ENCODE measurements at regions of chr3 and their contacts with region 1.

Region 1: DNA sequence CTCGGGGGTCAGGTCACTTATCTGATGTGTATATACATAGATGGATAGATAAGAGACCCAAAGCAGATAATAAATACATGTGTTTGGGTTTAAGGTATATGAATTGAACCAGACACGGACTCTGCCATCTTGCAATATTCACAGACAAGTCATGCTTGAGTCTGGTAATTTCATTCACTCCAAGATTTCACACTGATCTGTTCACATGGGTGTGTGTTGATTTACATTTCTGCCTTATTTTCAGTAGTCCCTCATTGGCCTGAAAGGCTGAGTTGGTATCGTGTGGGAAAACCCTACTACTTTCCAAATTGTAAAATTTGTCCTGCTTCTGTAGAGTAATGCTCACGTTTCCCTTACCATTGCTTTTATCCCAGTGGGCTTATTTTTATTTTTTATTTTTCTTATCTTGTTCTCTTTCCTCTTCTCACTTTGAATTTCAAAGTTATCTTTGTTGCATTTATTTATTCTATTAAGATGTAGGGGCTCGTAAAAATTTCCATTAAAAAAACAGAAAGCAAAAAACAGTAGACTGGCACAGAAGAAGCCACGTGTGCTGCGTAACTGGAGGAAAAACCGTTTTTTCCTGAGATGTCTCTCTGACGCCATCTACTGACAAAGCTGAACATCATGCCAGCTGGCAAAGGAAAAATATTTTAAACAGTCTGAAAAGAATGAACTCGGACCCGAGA is 10.8 kb upstream of the MFSD1 start:
- DNase-seq: peak in 2 of 4 donors; percentile 70 to 84
- ATAC-seq: peak; percentile 84
- H3K4me3 ChIP-seq: no peak overlapping the region
- H3K27ac ChIP-seq: no peak overlapping the region
- H3K4me1 ChIP-seq: no peaks in the 10 kb centered on the region
- H3K27me3 ChIP-seq: no peaks in the 10 kb centered on the region
- CTCF ChIP-seq: peak; percentile 58 to 67

Region 2: DNA sequence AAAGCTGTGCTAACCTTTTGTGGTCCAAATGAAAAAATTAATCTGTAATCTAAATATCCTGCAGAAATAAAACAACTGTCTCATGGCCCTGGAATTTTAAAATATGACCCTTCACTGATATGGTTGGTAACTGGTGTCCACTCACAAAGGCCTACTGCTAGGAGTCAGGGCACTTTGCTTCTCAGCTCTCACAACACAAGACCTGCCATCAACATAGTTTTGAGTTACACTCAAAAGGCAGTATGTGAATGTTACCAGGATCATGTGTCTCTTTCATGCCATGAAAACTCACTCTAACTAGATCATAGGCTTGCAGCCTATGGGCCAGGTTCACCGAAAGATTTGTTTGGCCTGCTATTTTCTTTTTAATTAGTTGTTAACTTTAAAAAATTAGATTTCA is 230.1 kb before region 1 on chr3:
- intact Hi-C with region 1: no loop called
- DNase-seq: no peak
- ATAC-seq: no peak
- H3K4me3 ChIP-seq: no peak overlapping the region
- H3K27ac ChIP-seq: no peak overlapping the region
- H3K4me1 ChIP-seq: no peaks in the 10 kb centered on the region
- H3K27me3 ChIP-seq: no peaks in the 10 kb centered on the region
- CTCF ChIP-seq: no peak

Region 3: GRCh38 chr3:158672293-158673176 is 118.5 kb before region 1 on chr3 and contains the start of gene LXN:
- intact Hi-C with region 1: loop called in 1 of 2 experiments (anchors 10 kb)
- DNase-seq: peak; percentile 78 to 95 (median 92)
- ATAC-seq: peak; percentile 100
- H3K4me3 ChIP-seq: peak within 1 kb of the TSS; percentile 53 to 55
- H3K27ac ChIP-seq: peak within 1 kb of the TSS; percentile 86 to 87
- H3K4me1 ChIP-seq: peaks cover 0 to 30% of the 10 kb centered on the region in 2 donors
- H3K27me3 ChIP-seq: no peaks in the 10 kb centered on the region
- CTCF ChIP-seq: peak; percentile 57 to 58
- polyA plus RNA-seq, gene LXN: 138 to 223 (median 198) TPM

Region 4: GRCh38 chr3:158727206-158728060 is 63.6 kb before region 1 on chr3:
- intact Hi-C with region 1: loop called in 1 of 2 experiments (anchors 2 kb)
- DNase-seq: peak in 2 of 4 donors; percentile 71 to 83
- ATAC-seq: peak; percentile 63
- H3K4me3 ChIP-seq: no peak overlapping the region
- H3K27ac ChIP-seq: peak overlapping the region in 1 of 2 donors; percentile 62
- H3K4me1 ChIP-seq: peaks cover 39 to 47% of the 10 kb centered on the region in 2 donors
- H3K27me3 ChIP-seq: peaks cover 0 to 4% of the 10 kb centered on the region in 2 donors
- CTCF ChIP-seq: peak; percentile 70 to 86

Measured in left lung (tissue), 14 donors.